Activated B cell treated with CpG ODN at 0.5 μM for 24 hours (primary cell): ENCODE measurements at regions of chr4 and their contacts with region 1.

Region 1: GRCh38 chr4:74874753-74875367 is 58.1 kb upstream of the PARM1 start:
- DNase-seq: no peak
- ATAC-seq: peak; percentile 81
- H3K4me3 Mint-ChIP-seq: no peak overlapping the region
- H3K27ac Mint-ChIP-seq: no peak overlapping the region
- H3K4me1 Mint-ChIP-seq: peaks cover 16% of the 10 kb centered on the region
- H3K27me3 Mint-ChIP-seq: peaks cover 9% of the 10 kb centered on the region
- CTCF ChIP-seq: peak; percentile 67

Region 2: DNA sequence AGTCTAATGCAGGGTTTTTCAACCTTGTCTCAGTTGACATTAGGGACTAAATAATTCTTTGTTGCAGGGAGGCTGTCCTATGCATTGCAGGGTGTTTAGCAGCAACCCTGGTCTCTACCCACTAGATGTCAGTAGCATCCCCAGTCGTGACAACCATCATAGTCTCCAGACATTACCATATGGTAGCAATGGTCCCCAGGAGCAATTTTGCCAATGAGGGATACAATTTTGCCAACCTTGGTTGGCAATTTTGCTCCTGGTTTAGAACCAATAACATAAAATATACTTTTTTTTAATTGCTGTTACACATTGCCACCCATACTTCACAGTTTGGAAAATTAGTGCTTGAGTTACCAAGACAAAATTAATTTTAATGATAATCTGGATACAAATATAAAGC is 503.9 kb before region 1 on chr4:
- CTCF ChIA-PET with region 1: no interaction called
- POLR2A ChIA-PET with region 1: no interaction called
- intact Hi-C with region 1: loop called (anchors 10 kb)
- DNase-seq: no peak
- ATAC-seq: peak; percentile 71
- H3K4me3 Mint-ChIP-seq: no peak overlapping the region
- H3K27ac Mint-ChIP-seq: no peak overlapping the region
- H3K4me1 Mint-ChIP-seq: no peaks in the 10 kb centered on the region
- H3K27me3 Mint-ChIP-seq: peaks cover 15% of the 10 kb centered on the region
- CTCF ChIP-seq: no peak

Region 3: GRCh38 chr4:75118739-75119138 is 243.9 kb after region 1 on chr4:
- CTCF ChIA-PET with region 1: interaction called, 29 read pairs
- POLR2A ChIA-PET with region 1: no interaction called
- intact Hi-C with region 1: loop called (anchors 1 kb)
- DNase-seq: no peak
- ATAC-seq: no peak
- H3K4me3 Mint-ChIP-seq: no peak overlapping the region
- H3K27ac Mint-ChIP-seq: no peak overlapping the region
- H3K4me1 Mint-ChIP-seq: peaks cover 5% of the 10 kb centered on the region
- H3K27me3 Mint-ChIP-seq: peaks cover 2% of the 10 kb centered on the region
- CTCF ChIP-seq: no peak

Region 4: DNA sequence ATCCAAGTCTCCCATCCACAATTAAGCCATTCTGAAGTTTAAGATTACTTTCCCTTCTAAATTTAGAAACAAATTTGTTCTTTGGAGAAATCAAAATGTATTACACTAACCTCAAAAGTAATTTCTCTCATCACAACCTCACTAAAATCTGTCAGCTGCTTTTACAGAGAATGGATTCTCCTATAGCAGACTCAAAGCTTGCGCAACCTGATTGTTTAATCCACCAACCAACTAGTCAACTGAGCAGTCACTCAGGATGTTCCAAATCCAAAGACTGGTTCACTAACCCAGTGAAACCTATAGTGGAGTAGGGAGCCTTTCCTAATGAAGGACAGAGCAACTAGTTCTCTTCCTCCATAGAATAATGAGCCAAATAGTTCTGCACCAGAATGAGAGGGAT is 595.0 kb after region 1 on chr4:
- CTCF ChIA-PET with region 1: no interaction called
- POLR2A ChIA-PET with region 1: no interaction called
- intact Hi-C with region 1: loop called (anchors 1 kb)
- DNase-seq: no peak
- ATAC-seq: no peak
- H3K4me3 Mint-ChIP-seq: no peak overlapping the region
- H3K27ac Mint-ChIP-seq: no peak overlapping the region
- H3K4me1 Mint-ChIP-seq: no peaks in the 10 kb centered on the region
- H3K27me3 Mint-ChIP-seq: no peaks in the 10 kb centered on the region
- CTCF ChIP-seq: no peak

Region 5: GRCh38 chr4:75849461-75849860 is 974.6 kb after region 1 on chr4:
- CTCF ChIA-PET with region 1: interaction called, 9 read pairs
- POLR2A ChIA-PET with region 1: no interaction called
- intact Hi-C with region 1: loop called (anchors 1 kb)
- DNase-seq: no peak
- ATAC-seq: no peak
- H3K4me3 Mint-ChIP-seq: no peak overlapping the region
- H3K27ac Mint-ChIP-seq: no peak overlapping the region
- H3K4me1 Mint-ChIP-seq: peaks cover 5% of the 10 kb centered on the region
- H3K27me3 Mint-ChIP-seq: peaks cover 7% of the 10 kb centered on the region
- CTCF ChIP-seq: no peak